Activated CD4-positive, alpha-beta memory T cell treated with anti-CD3 and anti-CD28 coated beads, Interleukin-2, amount 10 ng/mL, durations not matched to agents 7 days and 5 days (primary cell): ENCODE measurements at regions of chr14 and their contacts with region 1.

Region 1: GRCh38 chr14:50003213-50004031 is 110.5 kb downstream of the ARF6 start:
- DNase-seq: peak; percentile 88
- H3K4me3 Mint-ChIP-seq: peak overlapping the region; percentile 77
- H3K27ac Mint-ChIP-seq: peak overlapping the region; percentile 98
- H3K4me1 Mint-ChIP-seq: peaks cover 76% of the 10 kb centered on the region
- H3K27me3 Mint-ChIP-seq: no peaks in the 10 kb centered on the region

Region 2: DNA sequence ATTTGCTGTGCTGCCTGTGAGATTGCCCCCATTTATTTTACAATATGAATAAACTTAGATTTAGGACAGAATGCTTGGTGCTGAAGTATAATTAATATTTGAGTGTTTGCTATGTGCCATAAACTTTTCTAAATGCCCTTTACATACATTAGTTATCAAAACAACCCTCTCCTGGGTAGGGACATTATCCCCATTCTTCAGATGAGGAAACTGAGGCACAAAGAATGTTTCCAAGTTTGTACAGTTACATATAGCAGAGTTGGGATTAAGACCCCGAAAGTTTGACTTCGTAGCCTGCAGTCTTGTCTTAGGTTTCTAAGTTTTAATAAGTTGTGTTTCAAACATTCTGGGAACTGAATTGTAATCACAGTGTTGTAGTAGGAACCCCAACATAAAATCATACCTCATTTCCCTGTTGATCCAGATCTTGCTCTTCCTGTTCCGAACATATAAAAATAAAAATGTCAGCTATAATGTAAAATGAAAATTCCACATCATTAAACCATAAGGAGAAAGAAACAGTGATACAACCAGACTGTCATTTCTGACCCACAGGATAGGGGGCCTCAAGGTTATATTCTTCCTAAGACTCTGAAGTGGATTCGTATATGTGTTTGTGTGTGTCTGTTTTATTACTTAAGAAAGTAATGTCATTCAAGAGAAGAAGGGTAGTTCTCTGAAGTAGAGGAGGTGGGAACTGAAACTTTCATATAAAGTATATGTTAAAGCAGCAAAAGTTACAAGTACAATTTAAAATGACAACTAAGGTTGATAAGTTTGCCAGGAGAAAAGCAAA is 216.9 kb before region 1 on chr14:
- CTCF ChIA-PET with region 1: no interaction called
- POLR2A ChIA-PET with region 1: no interaction called
- DNase-seq: no peak
- H3K4me3 Mint-ChIP-seq: no peak overlapping the region
- H3K27ac Mint-ChIP-seq: no peak overlapping the region
- H3K4me1 Mint-ChIP-seq: peaks cover 5% of the 10 kb centered on the region
- H3K27me3 Mint-ChIP-seq: no peaks in the 10 kb centered on the region

Region 3: GRCh38 chr14:49852301-49853157 is 150.9 kb before region 1 on chr14 and contains the start of gene NEMF:
- CTCF ChIA-PET with region 1: interaction called, 33 read pairs
- POLR2A ChIA-PET with region 1: interaction called, 69 read pairs
- DNase-seq: peak; percentile 80
- H3K4me3 Mint-ChIP-seq: peak within 1 kb of the TSS; percentile 96
- H3K27ac Mint-ChIP-seq: peak within 1 kb of the TSS; percentile 94
- H3K4me1 Mint-ChIP-seq: peaks cover 46% of the 10 kb centered on the region
- H3K27me3 Mint-ChIP-seq: no peaks in the 10 kb centered on the region
- total RNA-seq, gene NEMF: 64.7 to 73.3 TPM

Region 4: DNA sequence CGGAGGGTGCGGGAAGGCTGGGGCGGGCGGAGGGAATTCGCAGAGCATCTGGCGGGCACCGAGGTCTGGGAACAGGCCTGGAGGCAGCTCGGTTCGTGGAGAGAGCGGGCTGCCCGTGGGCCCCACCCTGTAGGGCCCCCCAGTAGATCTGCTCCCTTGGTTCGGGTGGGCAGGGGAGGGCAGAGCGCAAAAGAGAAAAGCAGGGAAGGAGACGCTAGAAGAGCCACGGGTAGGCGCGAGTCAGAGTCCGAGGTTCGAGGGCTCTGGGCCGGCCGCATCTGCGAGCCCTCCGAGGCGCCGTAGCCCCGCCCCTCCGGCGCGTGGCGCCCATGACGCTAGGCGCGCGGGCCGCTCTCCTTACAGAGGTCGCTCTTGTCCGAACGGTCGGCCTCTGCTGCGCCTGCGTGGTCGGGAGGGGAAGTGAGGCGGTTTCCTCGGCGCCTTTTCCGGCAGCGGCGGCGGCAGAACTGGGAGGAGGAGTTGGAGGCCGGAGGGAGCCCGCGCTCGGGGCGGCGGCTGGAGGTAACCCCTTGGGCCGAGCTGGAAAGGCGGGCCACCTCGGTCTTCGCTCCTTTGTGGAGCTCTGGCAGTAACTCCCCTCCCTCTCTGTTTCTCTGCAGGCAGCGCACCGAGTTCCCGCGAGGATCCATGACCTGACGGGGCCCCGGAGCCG is 110.7 kb before region 1 on chr14 and contains the start of gene ARF6:
- CTCF ChIA-PET with region 1: interaction called, 21 read pairs
- POLR2A ChIA-PET with region 1: interaction called, 174 read pairs
- DNase-seq: peak; percentile 98
- H3K4me3 Mint-ChIP-seq: peak within 1 kb of the TSS; percentile 96
- H3K27ac Mint-ChIP-seq: peak within 1 kb of the TSS; percentile 100
- H3K4me1 Mint-ChIP-seq: peaks cover 20% of the 10 kb centered on the region
- H3K27me3 Mint-ChIP-seq: no peaks in the 10 kb centered on the region
- total RNA-seq, gene ARF6: 198 to 199 TPM

Region 5: GRCh38 chr14:49946320-49947141 is 56.9 kb before region 1 on chr14:
- CTCF ChIA-PET with region 1: interaction called, 3 read pairs
- POLR2A ChIA-PET with region 1: interaction called, 81 read pairs
- DNase-seq: peak; percentile 35
- H3K4me3 Mint-ChIP-seq: peak overlapping the region; percentile 41
- H3K27ac Mint-ChIP-seq: peak overlapping the region; percentile 87
- H3K4me1 Mint-ChIP-seq: peaks cover 77% of the 10 kb centered on the region
- H3K27me3 Mint-ChIP-seq: no peaks in the 10 kb centered on the region

Region 6: GRCh38 chr14:50018201-50018932 is 14.9 kb after region 1 on chr14:
- CTCF ChIA-PET with region 1: interaction called, 3 read pairs
- POLR2A ChIA-PET with region 1: interaction called, 26 read pairs
- DNase-seq: no peak
- H3K4me3 Mint-ChIP-seq: no peak overlapping the region
- H3K27ac Mint-ChIP-seq: no peak overlapping the region
- H3K4me1 Mint-ChIP-seq: peaks cover 44% of the 10 kb centered on the region
- H3K27me3 Mint-ChIP-seq: no peaks in the 10 kb centered on the region

Region 7: DNA sequence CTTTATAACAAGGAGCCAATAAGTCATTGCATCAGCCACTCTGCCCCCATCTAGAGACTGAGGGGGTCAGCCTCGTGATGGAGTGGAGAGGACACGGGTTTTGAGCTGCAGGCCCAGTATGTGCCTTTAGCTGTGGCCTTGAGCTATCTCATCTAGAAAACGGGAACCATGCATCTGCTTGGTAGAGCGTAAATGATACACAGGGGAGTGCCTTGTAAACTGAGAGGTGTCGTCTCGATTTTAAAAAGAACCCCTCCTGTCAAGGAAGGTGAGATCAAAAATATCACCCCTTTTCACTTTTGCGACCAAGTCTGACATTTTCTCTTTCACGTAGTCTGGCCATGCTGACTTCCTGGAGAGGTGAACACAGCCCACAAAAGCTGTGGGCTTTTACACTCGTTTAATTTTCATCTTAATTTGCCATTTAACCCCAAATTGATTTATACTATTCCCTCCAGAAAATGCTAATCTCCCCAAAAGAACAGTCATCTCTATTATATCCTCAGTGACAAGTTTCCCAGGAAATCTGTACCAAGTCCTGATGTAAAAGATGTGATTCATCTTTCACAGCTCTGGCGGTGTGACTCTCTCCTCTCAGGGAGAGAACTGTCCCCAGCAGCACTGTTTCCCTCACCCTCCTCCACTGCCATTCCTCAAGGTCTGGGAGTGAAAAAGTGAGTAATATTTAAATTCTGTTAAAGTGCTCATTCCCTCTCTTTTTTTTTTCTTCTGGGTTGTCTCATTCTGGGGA is 82.3 kb after region 1 on chr14:
- CTCF ChIA-PET with region 1: interaction called, 17 read pairs
- POLR2A ChIA-PET with region 1: interaction called, 130 read pairs
- DNase-seq: no peak
- H3K4me3 Mint-ChIP-seq: peak overlapping the region; percentile 28
- H3K27ac Mint-ChIP-seq: peak overlapping the region; percentile 98
- H3K4me1 Mint-ChIP-seq: peaks cover 86% of the 10 kb centered on the region
- H3K27me3 Mint-ChIP-seq: peaks cover 4% of the 10 kb centered on the region

Region 8: GRCh38 chr14:50128225-50128624 is 124.8 kb after region 1 on chr14:
- CTCF ChIA-PET with region 1: no interaction called
- POLR2A ChIA-PET with region 1: no interaction called
- DNase-seq: no peak
- H3K4me3 Mint-ChIP-seq: no peak overlapping the region
- H3K27ac Mint-ChIP-seq: no peak overlapping the region
- H3K4me1 Mint-ChIP-seq: peaks cover 5% of the 10 kb centered on the region
- H3K27me3 Mint-ChIP-seq: no peaks in the 10 kb centered on the region